Kidney (tissue), 22 donors: ENCODE measurements at regions of chr5 and their contacts with region 1.

Region 1: GRCh38 chr5:54959673-54960418 is 25.5 kb downstream of the ESM1 start:
- DNase-seq: peak in 2 of 5 donors; percentile 20 to 38
- H3K4me3 ChIP-seq: no peak overlapping the region
- H3K27ac ChIP-seq: no peak overlapping the region
- H3K4me1 ChIP-seq: no peaks in the 10 kb centered on the region
- H3K27me3 ChIP-seq: no peaks in the 10 kb centered on the region
- CTCF ChIP-seq: no peak

Region 2: DNA sequence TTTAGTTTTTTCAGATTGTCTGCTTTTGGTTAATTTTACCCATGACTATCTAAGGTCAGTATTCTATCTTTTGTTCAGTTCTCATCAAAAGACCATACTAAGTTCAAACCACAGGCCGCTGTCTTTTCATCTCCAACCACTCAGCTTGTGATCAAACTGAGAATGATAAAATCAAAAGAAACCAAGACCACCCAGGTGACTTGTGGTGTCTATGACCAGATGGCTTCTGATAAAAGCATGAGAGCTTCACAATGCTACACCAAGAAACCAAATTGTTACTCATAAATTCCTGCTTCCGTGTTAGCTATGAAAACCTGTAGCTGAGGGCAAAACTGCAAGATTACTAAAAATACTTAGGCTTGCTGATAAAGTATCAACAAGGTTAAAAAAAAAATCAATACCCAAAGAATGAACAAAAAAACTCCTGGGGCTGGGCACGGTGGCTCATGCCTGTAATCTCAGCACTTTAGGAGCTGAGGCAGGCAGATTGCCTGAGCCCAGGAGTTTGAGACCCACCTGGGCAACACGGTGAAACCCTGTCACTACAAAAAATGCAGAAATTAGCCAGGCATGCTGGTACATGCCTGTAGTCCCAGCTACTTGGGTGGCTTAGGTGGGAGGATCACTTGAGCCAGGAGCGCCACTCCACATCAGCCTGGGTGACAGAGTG is 174.3 kb after region 1 on chr5:
- intact Hi-C with region 1: loop called (anchors 10 kb)
- DNase-seq: no peak
- H3K4me3 ChIP-seq: no peak overlapping the region
- H3K27ac ChIP-seq: no peak overlapping the region
- H3K4me1 ChIP-seq: no peaks in the 10 kb centered on the region
- H3K27me3 ChIP-seq: no peaks in the 10 kb centered on the region
- CTCF ChIP-seq: no peak